Breast epithelium (tissue), 4 donors: ENCODE measurements at regions of chr18 and their contacts with region 1.

Region 1: DNA sequence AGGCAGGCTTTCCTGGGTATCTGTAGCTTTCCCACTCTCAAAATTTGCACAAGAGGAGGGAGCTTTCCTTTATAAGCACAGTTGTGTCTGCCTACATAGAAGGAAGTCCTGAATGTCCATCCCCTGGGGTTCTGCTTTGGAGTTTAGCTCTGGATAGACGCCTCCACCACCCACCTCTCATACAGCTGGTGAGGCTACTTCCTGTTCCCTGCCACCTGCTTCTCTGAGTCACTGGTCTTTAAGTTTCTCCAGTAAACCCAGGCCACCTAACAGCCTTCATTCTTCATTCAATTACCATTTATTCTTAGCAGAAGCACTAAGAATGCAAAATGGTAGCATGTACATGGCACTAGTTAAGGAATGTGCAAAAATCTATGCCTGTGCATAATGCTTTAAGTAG is 407.8 kb downstream of the CDH2 start:
- DNase-seq: no peak
- H3K4me3 ChIP-seq: no peak overlapping the region
- H3K27ac ChIP-seq: no peak overlapping the region
- H3K4me1 ChIP-seq: no peaks in the 10 kb centered on the region
- H3K27me3 ChIP-seq: no peaks in the 10 kb centered on the region
- CTCF ChIP-seq: no peak
- POLR2A ChIP-seq: no peak

Region 2: GRCh38 chr18:26286008-26286407 is 1483.1 kb before region 1 on chr18:
- intact Hi-C with region 1: no loop called
- DNase-seq: peak in 1 of 2 donors; percentile 25
- H3K4me3 ChIP-seq: no peak overlapping the region
- H3K27ac ChIP-seq: no peak overlapping the region
- H3K4me1 ChIP-seq: no peaks in the 10 kb centered on the region
- H3K27me3 ChIP-seq: no peaks in the 10 kb centered on the region
- CTCF ChIP-seq: no peak
- POLR2A ChIP-seq: no peak

Region 3: GRCh38 chr18:26642440-26643348 is 1126.5 kb before region 1 on chr18:
- intact Hi-C with region 1: loop called (anchors 5 kb)
- DNase-seq: no peak
- H3K4me3 ChIP-seq: no peak overlapping the region
- H3K27ac ChIP-seq: no peak overlapping the region
- H3K4me1 ChIP-seq: no peaks in the 10 kb centered on the region
- H3K27me3 ChIP-seq: no peaks in the 10 kb centered on the region
- CTCF ChIP-seq: no peak
- POLR2A ChIP-seq: no peak

Region 4: GRCh38 chr18:27780061-27780750 is 11.1 kb after region 1 on chr18:
- intact Hi-C with region 1: no loop called
- DNase-seq: no peak
- H3K4me3 ChIP-seq: no peak overlapping the region
- H3K27ac ChIP-seq: no peak overlapping the region
- H3K4me1 ChIP-seq: no peaks in the 10 kb centered on the region
- H3K27me3 ChIP-seq: no peaks in the 10 kb centered on the region
- CTCF ChIP-seq: no peak
- POLR2A ChIP-seq: no peak